ENCODE measurements at regions of chr10 and their contacts with region 1.

Region 1: DNA sequence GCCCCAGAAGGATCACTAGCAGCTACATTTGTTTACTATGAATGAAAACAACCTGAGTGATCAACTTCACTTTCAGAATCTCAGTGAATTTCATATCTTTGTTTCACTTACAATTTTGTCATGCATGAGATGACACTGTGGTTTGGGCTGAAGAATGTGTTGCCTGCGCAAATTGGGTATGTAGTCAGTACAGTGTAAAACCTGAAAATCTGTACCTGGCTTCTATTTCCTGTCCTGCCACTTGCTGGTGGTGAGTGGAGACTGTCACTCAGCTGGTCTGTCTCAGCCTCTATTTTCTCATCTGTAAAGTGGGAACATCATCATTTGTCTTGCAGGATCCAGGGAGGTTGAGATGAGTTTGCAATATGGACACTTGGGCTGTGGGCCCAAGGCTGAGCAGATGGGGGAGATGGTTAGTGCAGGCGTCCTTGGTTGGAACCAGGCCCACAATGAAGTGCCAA is 118.0 kb downstream of the WDFY4 start:
- DNase-seq: peak; percentile 46
- H3K4me3 ChIP-seq: no peak overlapping the region
- H3K27ac ChIP-seq: peak overlapping the region; percentile 7
- H3K4me1 ChIP-seq: peaks cover 34% of the 10 kb centered on the region
- CTCF ChIP-seq: no peak

Region 2: GRCh38 chr10:48690791-48691660 is 111.6 kb before region 1 on chr10:
- CTCF ChIA-PET with region 1: no interaction called
- POLR2A ChIA-PET with region 1: no interaction called
- intact Hi-C with region 1: no loop called
- DNase-seq: no peak
- H3K4me3 ChIP-seq: no peak overlapping the region
- H3K27ac ChIP-seq: no peak overlapping the region
- H3K4me1 ChIP-seq: peaks cover 27% of the 10 kb centered on the region
- CTCF ChIP-seq: no peak

Region 3: DNA sequence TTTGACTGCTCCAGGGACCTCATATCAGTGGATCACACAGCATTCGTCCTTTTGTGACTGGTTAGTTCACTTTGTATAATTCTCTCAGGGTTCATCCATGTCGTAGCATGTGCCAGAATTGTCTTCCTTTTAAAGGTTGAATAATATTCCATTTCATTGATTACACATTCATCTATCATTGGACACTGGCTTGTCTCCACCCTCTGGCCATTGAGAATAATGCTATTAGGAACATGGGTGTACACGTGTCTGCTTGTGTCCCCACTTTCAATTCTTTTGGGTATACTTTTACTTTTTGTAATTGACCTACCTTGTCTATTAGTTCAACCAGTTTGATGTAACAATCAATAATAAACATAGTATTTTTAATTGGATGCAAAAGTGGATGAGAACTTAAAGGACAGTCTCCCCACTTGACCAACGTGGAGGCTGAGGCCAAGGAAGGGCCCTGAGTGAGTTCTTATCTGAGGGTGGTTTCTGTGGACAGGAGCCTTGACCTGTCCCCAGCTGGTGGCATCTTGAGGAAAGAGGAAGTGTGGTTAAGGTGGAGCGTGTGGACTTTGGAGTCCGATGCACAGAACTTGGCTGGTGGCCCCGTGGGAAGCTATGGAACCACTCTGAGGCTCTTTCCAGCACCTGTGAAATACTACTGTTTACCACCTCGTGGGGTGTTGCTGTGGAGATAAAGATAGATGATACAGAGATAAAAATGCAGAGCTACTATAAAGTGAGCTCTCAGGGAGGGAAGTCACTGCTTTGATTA is 101.3 kb before region 1 on chr10:
- CTCF ChIA-PET with region 1: interaction called, 15 read pairs
- POLR2A ChIA-PET with region 1: no interaction called
- intact Hi-C with region 1: no loop called
- DNase-seq: peak; percentile 32
- H3K4me3 ChIP-seq: no peak overlapping the region
- H3K27ac ChIP-seq: no peak overlapping the region
- H3K4me1 ChIP-seq: peaks cover 38% of the 10 kb centered on the region
- CTCF ChIP-seq: peak; percentile 77

Region 4: GRCh38 chr10:48844616-48845015 is 42.0 kb after region 1 on chr10:
- CTCF ChIA-PET with region 1: interaction called, 17 read pairs
- POLR2A ChIA-PET with region 1: no interaction called
- intact Hi-C with region 1: no loop called
- DNase-seq: no peak
- H3K4me3 ChIP-seq: no peak overlapping the region
- H3K27ac ChIP-seq: no peak overlapping the region
- H3K4me1 ChIP-seq: no peaks in the 10 kb centered on the region
- CTCF ChIP-seq: no peak